B cell (primary cell): ENCODE measurements at regions of chr6 and their contacts with region 1.

Region 1: DNA sequence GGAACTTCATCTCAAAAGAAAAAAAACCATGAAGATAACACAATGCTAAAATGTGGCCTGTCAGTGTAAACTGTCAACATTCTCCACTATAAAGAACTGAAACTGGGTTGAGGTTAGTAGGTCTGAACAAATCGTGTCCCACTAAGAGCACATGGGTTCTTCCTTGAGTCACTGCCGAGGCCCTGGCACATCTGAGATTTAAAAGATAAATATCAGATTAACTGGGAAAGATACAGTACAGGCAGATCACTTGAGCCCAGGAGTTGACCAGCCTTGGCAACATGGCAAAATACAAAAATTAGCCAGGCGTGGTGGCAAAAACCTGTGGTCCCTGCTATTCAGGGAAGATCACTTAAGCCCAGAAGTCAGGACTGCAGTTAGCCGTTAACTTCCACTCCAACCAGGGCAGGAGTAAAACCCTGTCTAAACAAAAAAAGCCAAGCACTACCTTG is 5.6 kb downstream of the EEF1A1 start:
- DNase-seq: no peak
- ATAC-seq: peak; percentile 48
- H3K4me3 ChIP-seq: no peak overlapping the region
- H3K4me3 Mint-ChIP-seq: peak overlapping the region; percentile 70
- H3K27ac ChIP-seq: peak overlapping the region; percentile 53 to 69
- H3K27ac Mint-ChIP-seq: peak overlapping the region; percentile 86
- H3K4me1 ChIP-seq: peaks cover 46 to 56% of the 10 kb centered on the region in 2 donors
- H3K4me1 Mint-ChIP-seq: peaks cover 60% of the 10 kb centered on the region
- H3K27me3 ChIP-seq: no peaks in the 10 kb centered on the region
- H3K27me3 Mint-ChIP-seq: no peaks in the 10 kb centered on the region
- CTCF ChIP-seq: no peak

Region 2: DNA sequence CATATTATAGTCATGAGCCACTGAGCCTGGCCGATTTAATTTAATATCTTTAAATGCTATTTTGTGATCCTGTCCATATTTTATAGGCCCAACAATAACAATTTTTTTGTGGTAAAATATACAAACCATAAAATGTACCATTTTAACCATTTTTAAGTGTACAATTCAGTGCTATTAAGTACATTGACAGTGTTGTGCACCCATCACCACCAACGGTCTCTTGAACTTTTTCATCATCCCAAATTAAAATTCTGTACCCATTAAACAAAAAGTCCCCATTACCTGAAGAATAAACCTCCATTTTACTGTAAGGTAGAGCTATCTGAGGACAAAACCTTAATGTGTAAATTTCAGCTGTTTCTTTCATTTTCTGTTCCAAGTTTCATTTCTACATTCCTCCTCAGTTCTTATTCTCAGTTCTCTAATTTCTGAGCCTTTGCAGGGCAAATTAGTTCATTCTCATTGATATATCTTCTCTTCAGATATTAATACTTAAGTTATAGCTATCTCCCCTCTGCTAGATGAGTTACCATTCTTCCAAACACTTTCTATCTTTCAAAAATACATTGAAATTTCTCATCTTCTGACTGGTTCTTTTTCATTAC is 43.4 kb before region 1 on chr6:
- CTCF ChIA-PET with region 1: interaction called, 4 read pairs
- POLR2A ChIA-PET with region 1: interaction called, 4 read pairs
- intact Hi-C with region 1: loop called (anchors 2 kb)
- DNase-seq: peak; percentile 77
- ATAC-seq: peak; percentile 90
- H3K4me3 ChIP-seq: peak overlapping the region in 1 of 5 experiments; percentile 56
- H3K4me3 Mint-ChIP-seq: peak overlapping the region; percentile 60
- H3K27ac ChIP-seq: peak overlapping the region; percentile 71 to 82
- H3K27ac Mint-ChIP-seq: peak overlapping the region; percentile 62
- H3K4me1 ChIP-seq: peaks cover 14 to 19% of the 10 kb centered on the region in 2 donors
- H3K4me1 Mint-ChIP-seq: peaks cover 24% of the 10 kb centered on the region
- H3K27me3 ChIP-seq: no peaks in the 10 kb centered on the region
- H3K27me3 Mint-ChIP-seq: no peaks in the 10 kb centered on the region
- CTCF ChIP-seq: no peak

Region 3: GRCh38 chr6:73580247-73581149 is 65.3 kb after region 1 on chr6:
- CTCF ChIA-PET with region 1: interaction called, 22 read pairs
- POLR2A ChIA-PET with region 1: interaction called, 43 read pairs
- intact Hi-C with region 1: no loop called
- DNase-seq: peak; percentile 80
- ATAC-seq: peak; percentile 79
- H3K4me3 ChIP-seq: peak overlapping the region in 4 of 5 experiments; percentile 31 to 55 (median 46)
- H3K4me3 Mint-ChIP-seq: peak overlapping the region; percentile 87
- H3K27ac ChIP-seq: peak overlapping the region; percentile 91 to 93
- H3K27ac Mint-ChIP-seq: peak overlapping the region; percentile 96
- H3K4me1 ChIP-seq: peaks cover 32 to 34% of the 10 kb centered on the region in 2 donors
- H3K4me1 Mint-ChIP-seq: peaks cover 32% of the 10 kb centered on the region
- H3K27me3 ChIP-seq: no peaks in the 10 kb centered on the region
- H3K27me3 Mint-ChIP-seq: no peaks in the 10 kb centered on the region
- CTCF ChIP-seq: peak; percentile 24

Region 4: GRCh38 chr6:73610444-73611275 is 95.4 kb after region 1 on chr6:
- CTCF ChIA-PET with region 1: interaction called, 261 read pairs
- POLR2A ChIA-PET with region 1: interaction called, 10 read pairs
- intact Hi-C with region 1: loop called (anchors 1 kb)
- DNase-seq: peak; percentile 73
- ATAC-seq: peak; percentile 63
- H3K4me3 ChIP-seq: no peak overlapping the region
- H3K4me3 Mint-ChIP-seq: no peak overlapping the region
- H3K27ac ChIP-seq: no peak overlapping the region
- H3K27ac Mint-ChIP-seq: no peak overlapping the region
- H3K4me1 ChIP-seq: peaks cover 0 to 5% of the 10 kb centered on the region in 2 donors
- H3K4me1 Mint-ChIP-seq: peaks cover 5% of the 10 kb centered on the region
- H3K27me3 ChIP-seq: no peaks in the 10 kb centered on the region
- H3K27me3 Mint-ChIP-seq: no peaks in the 10 kb centered on the region
- CTCF ChIP-seq: peak; percentile 81

Region 5: DNA sequence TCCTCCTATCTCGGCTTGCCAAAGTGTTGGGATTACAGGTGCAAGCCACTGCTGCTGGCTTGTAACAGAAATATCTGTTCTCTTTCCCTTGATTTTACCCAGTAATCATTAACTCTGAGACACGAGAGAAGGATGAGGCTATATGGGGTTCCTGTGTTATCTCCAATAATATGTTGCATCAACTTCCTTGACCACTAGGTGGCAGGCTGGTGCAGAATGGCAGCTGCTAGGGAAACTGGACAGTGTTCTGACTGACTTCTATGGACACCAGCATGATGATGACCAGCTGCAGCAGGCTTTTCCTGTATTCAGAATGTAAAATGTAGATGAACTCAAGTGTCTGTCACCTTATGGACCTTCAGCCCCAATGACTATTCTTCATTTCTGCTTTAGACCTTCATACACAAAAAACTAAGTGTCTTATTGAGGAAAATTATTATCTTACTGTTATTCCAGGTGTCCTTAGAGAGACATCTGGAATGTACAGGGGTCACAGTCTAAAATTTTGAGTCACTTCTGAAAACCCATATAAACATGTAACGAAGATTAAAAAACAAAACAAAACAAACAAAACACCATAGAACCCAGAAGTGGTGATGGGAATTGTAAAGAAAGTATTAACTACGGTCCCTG is 160.4 kb after region 1 on chr6:
- CTCF ChIA-PET with region 1: interaction called, 3 read pairs
- POLR2A ChIA-PET with region 1: no interaction called
- intact Hi-C with region 1: loop called (anchors 1 kb)
- DNase-seq: peak; percentile 68
- ATAC-seq: peak; percentile 75
- H3K4me3 ChIP-seq: no peak overlapping the region
- H3K4me3 Mint-ChIP-seq: no peak overlapping the region
- H3K27ac ChIP-seq: no peak overlapping the region
- H3K27ac Mint-ChIP-seq: no peak overlapping the region
- H3K4me1 ChIP-seq: no peaks in the 10 kb centered on the region
- H3K4me1 Mint-ChIP-seq: no peaks in the 10 kb centered on the region
- H3K27me3 ChIP-seq: peaks cover 0 to 3% (median 0%) of the 10 kb centered on the region in 4 experiments
- H3K27me3 Mint-ChIP-seq: peaks cover 17% of the 10 kb centered on the region
- CTCF ChIP-seq: peak; percentile 96

Region 6: GRCh38 chr6:73732845-73733675 is 217.8 kb after region 1 on chr6:
- CTCF ChIA-PET with region 1: interaction called, 3 read pairs
- POLR2A ChIA-PET with region 1: no interaction called
- intact Hi-C with region 1: loop called (anchors 1 kb)
- DNase-seq: peak; percentile 65
- ATAC-seq: peak; percentile 89
- H3K4me3 ChIP-seq: no peak overlapping the region
- H3K4me3 Mint-ChIP-seq: no peak overlapping the region
- H3K27ac ChIP-seq: no peak overlapping the region
- H3K27ac Mint-ChIP-seq: no peak overlapping the region
- H3K4me1 ChIP-seq: no peaks in the 10 kb centered on the region
- H3K4me1 Mint-ChIP-seq: no peaks in the 10 kb centered on the region
- H3K27me3 ChIP-seq: no peaks in the 10 kb centered on the region
- H3K27me3 Mint-ChIP-seq: no peaks in the 10 kb centered on the region
- CTCF ChIP-seq: peak; percentile 84